OCI-LY7 (cell line): ENCODE measurements at regions of chr4 and their contacts with region 1.

Region 1: GRCh38 chr4:175351473-175351872 is 433.3 kb downstream of the ADAM29 start:
- DNase-seq: peak; percentile 84
- H3K4me3 ChIP-seq: peak overlapping the region; percentile 37
- H3K27ac ChIP-seq: peak overlapping the region; percentile 73
- H3K4me1 ChIP-seq: peaks cover 25% of the 10 kb centered on the region
- CTCF ChIP-seq: no peak

Region 2: GRCh38 chr4:175341203-175341755 is 10.2 kb before region 1 on chr4:
- CTCF ChIA-PET with region 1: no interaction called
- POLR2A ChIA-PET with region 1: interaction called, 12 read pairs
- intact Hi-C with region 1: no loop called
- DNase-seq: no peak
- H3K4me3 ChIP-seq: no peak overlapping the region
- H3K27ac ChIP-seq: no peak overlapping the region
- H3K4me1 ChIP-seq: no peaks in the 10 kb centered on the region
- CTCF ChIP-seq: no peak

Region 3: DNA sequence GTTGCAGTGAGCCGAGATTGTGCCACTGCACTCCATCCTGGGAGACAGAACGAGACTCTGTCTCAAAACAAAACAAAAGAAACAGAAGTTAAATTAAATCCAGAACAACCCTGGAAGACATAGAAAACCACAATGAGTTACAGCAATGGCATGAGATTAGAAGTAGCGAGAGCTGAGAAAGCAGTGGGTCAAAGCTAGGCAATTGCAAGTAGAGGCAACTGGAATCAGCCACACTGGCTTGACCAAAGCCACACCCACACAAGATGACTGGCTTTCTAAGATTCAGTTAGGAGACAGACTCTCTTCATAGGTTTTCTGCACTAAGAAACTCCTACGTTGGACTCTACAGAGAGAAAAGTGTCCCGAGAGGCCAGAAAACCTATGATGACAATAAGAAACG is 17.6 kb after region 1 on chr4:
- CTCF ChIA-PET with region 1: no interaction called
- POLR2A ChIA-PET with region 1: interaction called, 22 read pairs
- intact Hi-C with region 1: no loop called
- DNase-seq: no peak
- H3K4me3 ChIP-seq: no peak overlapping the region
- H3K27ac ChIP-seq: no peak overlapping the region
- H3K4me1 ChIP-seq: no peaks in the 10 kb centered on the region
- CTCF ChIP-seq: no peak